ENCODE measurements at regions of chr12 and their contacts with region 1.

Region 1: DNA sequence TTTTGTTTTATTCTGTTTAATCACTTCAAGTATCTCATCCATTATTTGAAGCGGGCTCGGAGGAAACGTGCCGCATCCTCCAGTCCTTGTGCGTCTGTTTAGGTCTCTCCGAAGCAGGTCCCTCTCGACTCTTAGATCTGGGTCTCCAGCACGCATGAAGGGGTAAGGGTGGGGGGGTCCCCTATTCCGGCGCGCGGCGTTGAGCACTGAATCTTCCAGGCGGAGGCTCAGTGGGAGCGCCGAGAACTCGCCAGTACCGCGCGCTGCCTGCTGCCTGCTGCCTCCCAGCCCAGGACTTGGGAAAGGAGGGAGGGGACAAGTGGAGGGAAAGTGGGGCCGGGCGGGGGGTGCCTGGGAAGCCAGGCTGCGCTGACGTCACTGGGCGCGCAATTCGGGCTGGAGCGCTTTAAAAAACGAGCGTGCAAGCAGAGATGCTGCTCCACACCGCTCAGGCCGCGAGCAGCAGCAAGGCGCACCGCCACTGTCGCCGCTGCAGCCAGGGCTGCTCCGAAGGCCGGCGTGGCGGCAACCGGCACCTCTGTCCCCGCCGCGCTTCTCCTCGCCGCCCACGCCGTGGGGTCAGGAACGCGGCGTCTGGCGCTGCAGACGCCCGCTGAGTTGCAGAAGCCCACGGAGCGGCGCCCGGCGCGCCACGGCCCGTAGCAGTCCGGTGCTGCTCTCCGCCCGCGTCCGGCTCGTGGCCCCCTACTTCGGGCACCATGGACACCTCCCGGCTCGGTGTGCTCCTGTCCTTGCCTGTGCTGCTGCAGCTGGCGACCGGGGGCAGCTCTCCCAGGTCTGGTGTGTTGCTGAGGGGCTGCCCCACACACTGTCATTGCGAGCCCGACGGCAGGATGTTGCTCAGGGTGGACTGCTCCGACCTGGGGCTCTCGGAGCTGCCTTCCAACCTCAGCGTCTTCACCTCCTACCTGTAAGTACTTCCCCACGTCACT is at the start of gene LGR5:
- DNase-seq: peak in 1 of 2 experiments; percentile 52
- H3K4me3 ChIP-seq: peak within 1 kb of the TSS; percentile 9
- H3K4me1 ChIP-seq: peaks cover 3% of the 10 kb centered on the region; the same call in 1 of the 2 replicates
- H3K27me3 ChIP-seq: peaks cover 65% of the 10 kb centered on the region

Region 2: DNA sequence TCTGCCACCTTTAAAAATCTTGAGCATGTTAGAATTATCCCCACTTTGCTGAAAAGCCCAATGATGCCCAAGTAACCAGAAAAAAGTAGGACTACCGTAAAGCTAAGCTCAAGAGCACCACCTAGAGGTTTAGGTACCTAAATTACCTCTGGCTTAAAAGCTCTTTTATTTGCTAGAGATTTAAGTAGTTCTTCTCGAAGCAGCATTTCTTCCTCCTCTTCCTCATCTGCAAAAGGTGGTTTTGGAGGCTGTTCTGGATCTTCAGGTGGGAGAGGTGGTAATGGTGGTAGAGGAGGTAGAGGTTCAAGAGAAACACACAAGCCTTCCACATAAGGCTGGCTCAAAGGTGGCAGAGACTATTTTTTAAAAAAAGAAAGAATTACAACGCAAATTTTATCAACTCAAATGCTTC is 197.1 kb after region 1 on chr12:
- in situ Hi-C with region 1: loop called (anchors 25 kb)
- DNase-seq: peak; percentile 37 to 75
- H3K4me3 ChIP-seq: no peak overlapping the region
- H3K4me1 ChIP-seq: no peaks in the 10 kb centered on the region
- H3K27me3 ChIP-seq: no peaks in the 10 kb centered on the region

Measured in HAP-1 (cell line).